Ovary (tissue), 10 donors: ENCODE measurements at regions of chr7 and their contacts with region 1.

Region 1: GRCh38 chr7:74569501-74570075 is 87.9 kb upstream of the GTF2I start:
- DNase-seq: no peak
- H3K4me3 ChIP-seq: no peak overlapping the region
- H3K27ac ChIP-seq: no peak overlapping the region
- H3K4me1 ChIP-seq: no peaks in the 10 kb centered on the region
- H3K27me3 ChIP-seq: no peaks in the 10 kb centered on the region
- CTCF ChIP-seq: no peak
- EP300 ChIP-seq: no peak
- POLR2A ChIP-seq: no peak

Region 2: DNA sequence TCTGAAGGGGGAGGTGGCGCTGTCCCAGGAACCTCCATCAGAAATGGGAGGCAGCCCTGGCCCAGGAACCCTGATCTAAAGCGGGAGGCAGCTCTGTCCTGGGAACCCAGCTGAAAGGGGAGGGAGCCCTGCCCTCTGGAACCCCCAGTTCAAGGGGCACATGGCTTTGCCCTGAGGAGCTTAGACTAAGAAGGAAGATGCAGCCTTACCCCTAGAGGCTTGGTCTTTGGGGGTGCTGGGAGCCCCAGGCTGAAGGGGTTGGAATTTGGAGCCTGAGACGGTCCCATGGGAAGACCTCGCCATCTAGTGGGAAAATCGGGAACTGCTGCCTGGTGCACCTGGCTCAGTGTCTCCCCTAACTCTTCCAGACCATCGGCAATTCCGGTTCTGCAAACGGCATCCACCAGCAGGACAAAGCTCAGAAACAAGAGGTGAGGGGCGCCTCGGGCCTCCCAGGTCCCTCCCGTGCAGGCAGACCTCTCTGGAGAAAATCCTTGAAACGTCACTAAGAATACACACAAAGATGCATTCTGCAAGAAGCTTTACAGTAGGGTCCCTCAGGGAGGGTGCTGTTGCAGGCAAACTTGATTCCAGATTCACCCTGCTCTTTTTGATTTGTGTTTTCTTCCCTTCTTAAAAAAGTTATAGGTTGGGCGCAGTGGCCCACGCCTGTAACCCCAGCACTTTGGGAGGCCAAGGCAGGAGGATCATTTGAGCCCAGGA is 168.3 kb before region 1 on chr7:
- intact Hi-C with region 1: no loop called
- DNase-seq: peak; percentile 65 to 84 (median 83)
- H3K4me3 ChIP-seq: no peak overlapping the region
- H3K27ac ChIP-seq: no peak overlapping the region
- H3K4me1 ChIP-seq: no peaks in the 10 kb centered on the region
- H3K27me3 ChIP-seq: no peaks in the 10 kb centered on the region
- CTCF ChIP-seq: peak; percentile 86 to 93 (median 93)
- EP300 ChIP-seq: no peak
- POLR2A ChIP-seq: no peak

Region 3: GRCh38 chr7:74417419-74417971 is 152.1 kb before region 1 on chr7:
- intact Hi-C with region 1: loop called in 1 of 4 experiments (anchors 5 kb)
- DNase-seq: peak; percentile 61 to 79 (median 73)
- H3K4me3 ChIP-seq: no peak overlapping the region
- H3K27ac ChIP-seq: no peak overlapping the region
- H3K4me1 ChIP-seq: no peaks in the 10 kb centered on the region
- H3K27me3 ChIP-seq: no peaks in the 10 kb centered on the region
- CTCF ChIP-seq: peak; percentile 92 to 95 (median 94)
- EP300 ChIP-seq: no peak
- POLR2A ChIP-seq: peak; percentile 21

Region 4: GRCh38 chr7:74449809-74450397 is 119.7 kb before region 1 on chr7:
- intact Hi-C with region 1: loop called in 1 of 4 experiments (anchors 10 kb)
- DNase-seq: peak in 3 of 5 donors; percentile 38 to 51 (median 45)
- H3K4me3 ChIP-seq: no peak overlapping the region
- H3K27ac ChIP-seq: no peak overlapping the region
- H3K4me1 ChIP-seq: peaks cover 6% of the 10 kb centered on the region
- H3K27me3 ChIP-seq: no peaks in the 10 kb centered on the region
- CTCF ChIP-seq: peak in 2 of 3 donors; percentile 51 to 70
- EP300 ChIP-seq: no peak
- POLR2A ChIP-seq: no peak

Region 5: GRCh38 chr7:74498996-74499831 is 70.4 kb before region 1 on chr7:
- intact Hi-C with region 1: loop called in 1 of 4 experiments (anchors 10 kb)
- DNase-seq: no peak
- H3K4me3 ChIP-seq: no peak overlapping the region
- H3K27ac ChIP-seq: no peak overlapping the region
- H3K4me1 ChIP-seq: peaks cover 5% of the 10 kb centered on the region
- H3K27me3 ChIP-seq: no peaks in the 10 kb centered on the region
- CTCF ChIP-seq: no peak
- EP300 ChIP-seq: no peak
- POLR2A ChIP-seq: no peak